B cell (primary cell): ENCODE measurements at regions of chr2 and their contacts with region 1.

Region 1: GRCh38 chr2:157327621-157328500 is 2.2 kb upstream of the ERMN start:
- DNase-seq: peak; percentile 88
- ATAC-seq: peak; percentile 98
- H3K4me3 ChIP-seq: peak overlapping the region in 1 of 5 experiments; percentile 2
- H3K4me3 Mint-ChIP-seq: peak overlapping the region; percentile 71
- H3K27ac ChIP-seq: no peak overlapping the region
- H3K27ac Mint-ChIP-seq: peak overlapping the region; percentile 60
- H3K4me1 ChIP-seq: peaks cover 9 to 10% of the 10 kb centered on the region in 2 donors
- H3K4me1 Mint-ChIP-seq: peaks cover 14% of the 10 kb centered on the region
- H3K27me3 ChIP-seq: no peaks in the 10 kb centered on the region
- H3K27me3 Mint-ChIP-seq: no peaks in the 10 kb centered on the region
- CTCF ChIP-seq: peak; percentile 97

Region 2: DNA sequence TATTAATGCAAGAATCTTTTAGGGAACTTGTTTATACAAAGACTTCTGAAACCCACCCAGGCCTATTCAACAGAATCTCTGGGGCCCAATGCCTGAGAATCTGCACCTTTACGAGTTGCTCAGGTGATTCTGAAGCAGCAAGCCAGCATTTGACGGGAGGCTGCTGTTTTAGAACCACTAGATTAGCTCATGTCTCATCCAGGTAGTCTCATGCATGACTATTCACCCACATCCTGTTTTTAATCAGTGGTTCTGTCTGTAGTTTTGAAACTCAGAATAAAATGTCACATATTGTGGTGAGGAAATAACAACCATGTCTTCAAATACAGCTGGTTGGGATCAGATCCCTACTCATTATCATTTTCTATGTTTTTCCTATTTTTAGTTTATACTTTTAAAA is 76.5 kb after region 1 on chr2:
- CTCF ChIA-PET with region 1: interaction called, 30 read pairs
- POLR2A ChIA-PET with region 1: no interaction called
- intact Hi-C with region 1: no loop called
- DNase-seq: peak; percentile 91
- ATAC-seq: peak; percentile 91
- H3K4me3 ChIP-seq: peak overlapping the region in 1 of 5 experiments; percentile 46
- H3K4me3 Mint-ChIP-seq: peak overlapping the region; percentile 68
- H3K27ac ChIP-seq: peak overlapping the region; percentile 67 to 86
- H3K27ac Mint-ChIP-seq: peak overlapping the region; percentile 92
- H3K4me1 ChIP-seq: peaks cover 29% of the 10 kb centered on the region in 2 donors
- H3K4me1 Mint-ChIP-seq: peaks cover 51% of the 10 kb centered on the region
- H3K27me3 ChIP-seq: no peaks in the 10 kb centered on the region
- H3K27me3 Mint-ChIP-seq: no peaks in the 10 kb centered on the region
- CTCF ChIP-seq: no peak

Region 3: DNA sequence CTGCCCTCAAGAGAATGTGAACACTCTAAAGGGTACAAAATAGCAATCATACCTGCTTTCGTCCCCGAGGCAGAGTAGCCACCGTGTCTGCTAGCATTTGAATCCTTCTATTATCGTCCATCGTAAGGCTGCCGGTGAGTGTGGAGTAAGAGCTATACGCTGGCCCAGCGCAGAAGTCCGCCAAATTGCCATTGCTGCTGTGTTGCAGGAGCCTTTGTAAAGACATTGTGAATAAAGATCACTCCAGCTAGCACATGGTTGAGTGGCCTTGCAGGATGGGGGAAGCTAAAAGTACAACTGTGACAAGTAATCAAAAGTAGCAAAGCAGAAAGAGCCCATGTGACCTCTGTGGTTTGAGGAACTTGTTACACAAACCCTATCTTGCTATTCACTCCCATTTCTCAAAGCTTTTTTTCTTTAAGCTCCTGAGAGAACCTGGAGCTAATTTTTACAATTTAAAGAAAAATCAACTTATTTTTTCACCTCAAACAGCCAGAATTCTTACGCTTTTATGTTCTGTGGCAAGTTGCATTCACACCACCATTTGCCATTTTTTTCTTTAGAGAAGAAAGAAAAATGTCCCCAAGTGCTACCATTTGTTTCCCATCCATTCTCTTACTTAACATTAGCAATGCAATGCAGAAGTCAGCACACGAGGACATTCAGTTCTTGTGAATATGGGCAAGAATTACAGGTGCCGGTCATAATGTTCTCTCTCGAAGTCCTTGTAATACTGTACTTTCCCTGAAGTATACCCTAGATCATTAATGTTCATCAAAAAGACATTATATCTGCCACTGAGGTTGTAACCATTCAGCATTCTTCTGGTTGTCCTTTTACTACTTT is 116.2 kb after region 1 on chr2 and contains the start of gene CYTIP:
- CTCF ChIA-PET with region 1: interaction called, 52 read pairs
- POLR2A ChIA-PET with region 1: interaction called, 10 read pairs
- intact Hi-C with region 1: loop called (anchors 1 kb)
- DNase-seq: peak; percentile 88
- ATAC-seq: peak; percentile 58
- H3K4me3 ChIP-seq: peak within 1 kb of the TSS; percentile 82 to 98 (median 92)
- H3K4me3 Mint-ChIP-seq: peak within 1 kb of the TSS; percentile 94
- H3K27ac ChIP-seq: peak within 1 kb of the TSS; percentile 93 to 96
- H3K27ac Mint-ChIP-seq: peak within 1 kb of the TSS; percentile 95
- H3K4me1 ChIP-seq: peaks cover 40 to 43% of the 10 kb centered on the region in 2 donors
- H3K4me1 Mint-ChIP-seq: peaks cover 39% of the 10 kb centered on the region
- H3K27me3 ChIP-seq: no peaks in the 10 kb centered on the region
- H3K27me3 Mint-ChIP-seq: no peaks in the 10 kb centered on the region
- CTCF ChIP-seq: no peak
- total RNA-seq, gene CYTIP: 327 and 358 TPM in 2 replicates

Region 4: DNA sequence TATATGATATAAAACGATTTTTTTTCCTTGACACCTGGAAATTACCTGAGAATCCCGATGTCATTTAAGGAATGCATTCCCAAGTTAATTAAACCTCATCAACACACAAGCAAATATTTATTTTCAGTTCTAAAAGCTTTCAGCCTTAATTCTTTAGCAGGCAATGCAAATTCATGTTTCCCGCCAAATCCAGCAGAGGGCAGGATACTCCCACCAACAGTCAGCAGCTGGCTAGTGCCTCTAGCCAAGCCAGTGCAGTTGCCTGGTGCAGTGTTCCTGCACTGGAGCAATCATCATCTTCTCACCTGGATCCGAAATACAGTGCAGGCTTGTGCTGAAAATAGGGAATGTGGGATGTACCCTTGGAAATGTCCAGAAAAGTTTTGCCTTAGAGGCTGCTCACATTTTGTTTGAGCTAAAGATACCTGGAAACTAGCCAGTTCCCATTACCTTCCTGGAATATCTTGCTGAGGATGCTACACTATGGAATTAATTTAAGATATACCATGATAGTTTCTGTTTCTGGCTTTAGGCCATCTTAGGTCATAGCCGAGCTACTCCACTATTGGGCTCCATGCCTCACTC is 164.4 kb after region 1 on chr2:
- CTCF ChIA-PET with region 1: interaction called, 157 read pairs
- POLR2A ChIA-PET with region 1: no interaction called
- intact Hi-C with region 1: loop called (anchors 1 kb)
- DNase-seq: peak; percentile 81
- ATAC-seq: peak; percentile 96
- H3K4me3 ChIP-seq: no peak overlapping the region
- H3K4me3 Mint-ChIP-seq: no peak overlapping the region
- H3K27ac ChIP-seq: no peak overlapping the region
- H3K27ac Mint-ChIP-seq: no peak overlapping the region
- H3K4me1 ChIP-seq: peaks cover 6 to 14% of the 10 kb centered on the region in 2 donors
- H3K4me1 Mint-ChIP-seq: peaks cover 20% of the 10 kb centered on the region
- H3K27me3 ChIP-seq: no peaks in the 10 kb centered on the region
- H3K27me3 Mint-ChIP-seq: no peaks in the 10 kb centered on the region
- CTCF ChIP-seq: peak; percentile 91

Region 5: GRCh38 chr2:157596992-157597681 is 269.3 kb after region 1 on chr2:
- CTCF ChIA-PET with region 1: interaction called, 97 read pairs
- POLR2A ChIA-PET with region 1: no interaction called
- intact Hi-C with region 1: loop called (anchors 1 kb)
- DNase-seq: peak; percentile 67
- ATAC-seq: peak; percentile 84
- H3K4me3 ChIP-seq: peak overlapping the region in 3 of 5 experiments; percentile 6 to 42 (median 27)
- H3K4me3 Mint-ChIP-seq: peak overlapping the region; percentile 66
- H3K27ac ChIP-seq: no peak overlapping the region
- H3K27ac Mint-ChIP-seq: no peak overlapping the region
- H3K4me1 ChIP-seq: peaks cover 0 to 4% of the 10 kb centered on the region in 2 donors
- H3K4me1 Mint-ChIP-seq: peaks cover 7% of the 10 kb centered on the region
- H3K27me3 ChIP-seq: peaks cover 0 to 8% (median 2%) of the 10 kb centered on the region in 4 experiments
- H3K27me3 Mint-ChIP-seq: peaks cover 16% of the 10 kb centered on the region
- CTCF ChIP-seq: peak; percentile 75

Region 6: DNA sequence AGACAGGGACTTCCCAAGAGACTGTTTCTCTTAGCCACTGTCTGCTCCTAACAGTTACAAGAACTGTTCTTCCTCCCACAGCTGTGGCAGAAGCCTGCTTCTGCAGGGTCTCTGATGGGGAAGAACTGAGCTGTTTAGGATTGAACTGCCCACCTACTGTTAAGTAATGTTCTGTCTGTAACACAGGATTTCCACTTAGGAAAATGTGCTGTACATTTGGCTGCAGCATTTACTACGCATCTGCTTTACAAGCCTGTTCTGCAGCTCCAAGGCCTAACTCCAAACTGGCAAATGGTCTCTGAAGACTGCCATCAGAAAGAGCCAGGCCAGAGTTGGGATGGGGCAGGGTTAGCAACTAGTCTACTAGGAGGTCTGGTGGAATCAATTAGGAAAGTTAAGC is 686.0 kb after region 1 on chr2:
- CTCF ChIA-PET with region 1: interaction called, 3 read pairs
- POLR2A ChIA-PET with region 1: no interaction called
- intact Hi-C with region 1: loop called (anchors 1 kb)
- DNase-seq: no peak
- ATAC-seq: no peak
- H3K4me3 ChIP-seq: no peak overlapping the region
- H3K4me3 Mint-ChIP-seq: no peak overlapping the region
- H3K27ac ChIP-seq: no peak overlapping the region
- H3K27ac Mint-ChIP-seq: no peak overlapping the region
- H3K4me1 ChIP-seq: no peaks in the 10 kb centered on the region
- H3K4me1 Mint-ChIP-seq: no peaks in the 10 kb centered on the region
- H3K27me3 ChIP-seq: peaks cover 0 to 5% (median 2%) of the 10 kb centered on the region in 4 experiments
- H3K27me3 Mint-ChIP-seq: peaks cover 15% of the 10 kb centered on the region
- CTCF ChIP-seq: no peak